ENCODE measurements at regions of chr1 and their contacts with region 1.

Region 1: DNA sequence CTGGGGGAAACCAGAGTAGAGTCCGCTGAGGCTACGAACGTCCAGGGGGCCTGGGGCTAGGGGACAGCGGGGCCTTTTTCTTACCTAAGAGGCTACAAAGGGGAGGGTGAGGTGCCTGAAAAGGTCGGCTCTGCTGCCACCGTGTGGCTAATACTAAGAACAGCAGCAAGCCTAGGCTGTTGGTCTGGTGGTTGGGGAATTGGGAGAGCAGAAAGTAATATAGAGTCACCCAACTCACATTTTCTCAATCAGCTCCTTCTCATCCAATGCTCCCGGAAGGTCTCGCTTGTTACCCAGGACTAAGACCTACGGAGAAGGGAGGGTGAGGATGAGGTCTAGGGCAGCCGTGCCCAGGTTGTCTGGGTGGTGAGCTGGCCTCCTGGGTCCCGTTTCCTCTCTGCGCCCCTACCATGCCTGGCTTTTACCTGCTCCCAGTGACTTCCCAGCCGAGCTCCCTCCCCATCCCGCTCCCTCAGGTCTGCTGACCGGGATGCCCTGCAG is 9.3 kb downstream of the ARL8A start:
- DNase-seq: peak; percentile 79
- H3K4me3 ChIP-seq: no peak overlapping the region
- H3K27ac ChIP-seq: no peak overlapping the region
- H3K4me1 ChIP-seq: no peaks in the 10 kb centered on the region
- H3K27me3 ChIP-seq: no peaks in the 10 kb centered on the region
- CTCF ChIP-seq: peak; percentile 90

Region 2: GRCh38 chr1:201530741-201531531 is 604.3 kb before region 1 on chr1:
- CTCF ChIA-PET with region 1: no interaction called
- POLR2A ChIA-PET with region 1: no interaction called
- intact Hi-C with region 1: loop called (anchors 10 kb)
- DNase-seq: peak; percentile 91
- H3K4me3 ChIP-seq: no peak overlapping the region
- H3K27ac ChIP-seq: no peak overlapping the region
- H3K4me1 ChIP-seq: peaks cover 33% of the 10 kb centered on the region
- H3K27me3 ChIP-seq: no peaks in the 10 kb centered on the region
- CTCF ChIP-seq: peak; percentile 94

Region 3: DNA sequence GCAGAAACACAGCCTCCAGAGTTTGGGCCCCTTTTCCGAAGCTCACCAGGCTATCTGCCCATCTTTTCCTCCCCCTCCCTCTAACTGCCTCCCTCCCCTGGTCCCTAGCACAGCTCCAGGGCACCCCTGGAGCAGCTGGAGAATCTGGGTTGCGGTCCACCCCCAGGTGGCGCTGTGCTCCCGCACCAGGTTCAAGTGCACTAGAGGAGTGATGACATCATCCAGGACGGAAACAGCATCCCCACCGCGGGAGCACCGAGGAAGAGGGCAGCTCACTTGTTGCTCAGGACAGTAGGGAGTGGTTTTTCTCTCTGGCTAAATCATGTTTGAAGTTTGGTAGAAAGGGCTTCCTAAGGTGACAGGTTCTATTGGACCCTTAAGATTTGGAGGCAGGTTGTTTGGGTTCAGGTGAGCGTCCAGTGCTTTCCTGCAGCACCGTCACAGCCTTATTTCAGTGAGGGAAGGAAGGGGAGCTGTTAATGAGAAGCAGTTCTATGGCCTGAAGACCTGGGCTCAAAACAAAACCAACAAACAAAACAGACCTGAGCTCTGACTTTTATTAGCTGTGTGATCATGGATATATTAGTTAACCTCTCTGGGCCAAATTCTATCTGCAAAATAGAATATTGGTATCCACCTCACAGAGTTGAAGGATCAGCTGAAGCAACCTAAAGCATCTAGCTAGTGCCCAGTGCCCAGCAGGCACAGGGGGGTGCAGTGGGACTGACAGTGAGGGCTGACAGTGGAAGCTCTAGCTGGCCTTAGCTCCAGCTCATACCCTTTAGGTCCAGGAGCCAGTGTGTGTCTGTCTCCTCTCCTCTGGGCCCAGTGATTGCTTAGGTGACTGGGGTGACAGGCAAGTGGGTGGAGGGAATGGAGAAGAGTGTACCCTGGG is 239.1 kb before region 1 on chr1:
- CTCF ChIA-PET with region 1: no interaction called
- POLR2A ChIA-PET with region 1: no interaction called
- intact Hi-C with region 1: loop called (anchors 10 kb)
- DNase-seq: peak; percentile 93
- H3K4me3 ChIP-seq: no peak overlapping the region
- H3K27ac ChIP-seq: no peak overlapping the region
- H3K4me1 ChIP-seq: no peaks in the 10 kb centered on the region
- H3K27me3 ChIP-seq: no peaks in the 10 kb centered on the region
- CTCF ChIP-seq: peak; percentile 99

Region 4: DNA sequence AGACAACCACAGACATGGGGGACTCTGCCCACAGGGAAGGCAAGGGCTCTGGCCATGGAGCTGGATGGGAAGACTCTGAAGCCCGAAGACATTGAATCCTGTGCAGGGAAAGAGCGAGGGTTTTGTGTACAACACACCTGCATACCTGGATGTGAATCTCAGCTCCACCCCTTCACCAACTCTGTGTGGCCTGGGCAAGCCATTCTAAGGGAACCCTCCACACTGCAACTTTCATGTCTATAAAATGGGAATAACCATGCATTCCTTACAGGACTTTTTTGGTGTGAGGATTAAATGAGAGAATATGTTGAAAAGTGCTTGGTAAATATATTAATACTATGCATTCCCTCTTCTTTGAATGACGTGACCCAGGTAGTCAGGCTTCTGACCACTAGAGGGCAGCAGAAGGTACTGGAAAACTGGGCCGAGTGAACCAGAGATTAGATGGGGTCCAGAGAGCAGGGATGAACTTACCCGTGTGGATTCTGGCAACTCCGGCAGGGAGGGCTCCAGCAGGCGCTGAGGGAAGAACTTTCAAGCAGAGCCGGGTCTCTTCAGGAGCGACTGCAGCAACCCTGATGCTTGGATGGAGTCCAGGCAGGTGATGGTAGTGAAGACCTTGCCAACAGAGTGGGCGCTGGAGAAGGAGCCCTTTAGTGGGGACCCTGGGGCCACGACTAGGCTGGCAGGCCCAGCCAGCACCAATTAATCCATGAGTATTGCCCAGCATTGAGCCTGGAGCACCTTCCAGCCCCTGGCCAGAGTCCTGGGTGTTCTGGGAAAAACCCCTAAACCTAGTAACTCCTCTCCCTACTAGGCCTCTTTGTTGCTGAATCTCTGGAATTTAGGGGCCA is 125.7 kb before region 1 on chr1:
- CTCF ChIA-PET with region 1: interaction called, 3 read pairs
- POLR2A ChIA-PET with region 1: no interaction called
- intact Hi-C with region 1: loop called (anchors 1 kb)
- DNase-seq: peak; percentile 83
- H3K4me3 ChIP-seq: no peak overlapping the region
- H3K27ac ChIP-seq: no peak overlapping the region
- H3K4me1 ChIP-seq: no peaks in the 10 kb centered on the region
- H3K27me3 ChIP-seq: no peaks in the 10 kb centered on the region
- CTCF ChIP-seq: peak; percentile 90